Caco-2 (cell line): ENCODE measurements at regions of chr7 and their contacts with region 1.

Region 1: GRCh38 chr7:23679898-23680413 is at the start of gene FAM221A:
- DNase-seq: peak; percentile 91 to 93
- H3K4me3 ChIP-seq: peak within 1 kb of the TSS; percentile 66
- H3K4me3 Mint-ChIP-seq: peak within 1 kb of the TSS; percentile 87
- H3K27ac Mint-ChIP-seq: peak within 1 kb of the TSS; percentile 65
- H3K4me1 ChIP-seq: peaks cover 5% of the 10 kb centered on the region
- H3K4me1 Mint-ChIP-seq: no peaks in the 10 kb centered on the region
- H3K27me3 ChIP-seq: no peaks in the 10 kb centered on the region
- H3K27me3 Mint-ChIP-seq: no peaks in the 10 kb centered on the region
- CTCF ChIP-seq: peak; percentile 64 to 80
- total RNA-seq, gene FAM221A: 13.2 and 19.1 TPM in 2 replicates

Region 2: GRCh38 chr7:23597094-23598091 is 82.6 kb before region 1 on chr7 and contains the start of gene CCDC126:
- CTCF ChIA-PET with region 1: interaction called, 5 read pairs
- POLR2A ChIA-PET with region 1: interaction called, 4 read pairs
- intact Hi-C with region 1: loop called (anchors 2 kb)
- DNase-seq: peak; percentile 95 to 97
- H3K4me3 ChIP-seq: peak within 1 kb of the TSS; percentile 63
- H3K4me3 Mint-ChIP-seq: peak within 1 kb of the TSS; percentile 94
- H3K27ac Mint-ChIP-seq: peak within 1 kb of the TSS; percentile 81
- H3K4me1 ChIP-seq: peaks cover 18% of the 10 kb centered on the region
- H3K4me1 Mint-ChIP-seq: peaks cover 22% of the 10 kb centered on the region
- H3K27me3 ChIP-seq: no peaks in the 10 kb centered on the region
- H3K27me3 Mint-ChIP-seq: peaks cover 2% of the 10 kb centered on the region
- CTCF ChIP-seq: no peak
- total RNA-seq, gene CCDC126: 10.1 and 11.3 TPM in 2 replicates